ENCODE measurements at regions of chr4 and their contacts with region 1.

Region 1: GRCh38 chr4:87081826-87082225 is 138.6 kb downstream of the KLHL8 start:
- DNase-seq: no peak

Region 2: GRCh38 chr4:86564795-86565194 is 517.0 kb before region 1 on chr4:
- intact Hi-C with region 1: no loop called
- DNase-seq: no peak

Region 3: DNA sequence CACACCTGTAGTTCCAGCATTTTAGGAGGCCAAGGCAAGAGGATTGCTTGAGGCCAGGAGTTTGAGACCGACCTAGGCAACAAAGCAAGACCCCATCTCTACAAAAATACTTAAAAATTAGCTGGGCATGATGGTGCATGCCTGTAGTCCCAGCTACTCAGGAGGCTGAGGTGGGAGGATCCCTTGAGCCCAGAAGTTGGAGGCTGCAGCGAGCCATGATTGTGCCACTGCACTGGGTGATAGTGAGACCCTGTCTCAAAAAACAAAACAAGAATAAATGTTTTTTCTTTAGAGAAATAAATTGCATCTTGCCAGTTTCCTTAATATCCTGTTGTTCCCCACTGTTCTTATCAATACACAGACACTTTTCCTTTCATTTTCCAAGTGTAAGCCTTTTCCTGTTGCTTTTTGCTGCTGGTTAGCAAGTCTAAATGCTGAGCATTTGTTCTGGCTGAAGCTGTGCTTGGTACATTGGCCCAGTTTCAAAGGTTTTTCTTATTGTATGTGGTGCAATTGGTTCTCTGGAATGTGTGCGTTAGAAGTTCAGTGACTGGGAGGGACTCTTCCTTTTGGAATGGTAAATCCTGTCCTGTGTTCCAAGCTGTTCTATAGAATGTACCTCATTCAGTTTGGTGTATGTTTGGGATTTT is 48.8 kb before region 1 on chr4:
- intact Hi-C with region 1: loop called in 1 of 2 experiments (anchors 5 kb)
- DNase-seq: no peak

Region 4: DNA sequence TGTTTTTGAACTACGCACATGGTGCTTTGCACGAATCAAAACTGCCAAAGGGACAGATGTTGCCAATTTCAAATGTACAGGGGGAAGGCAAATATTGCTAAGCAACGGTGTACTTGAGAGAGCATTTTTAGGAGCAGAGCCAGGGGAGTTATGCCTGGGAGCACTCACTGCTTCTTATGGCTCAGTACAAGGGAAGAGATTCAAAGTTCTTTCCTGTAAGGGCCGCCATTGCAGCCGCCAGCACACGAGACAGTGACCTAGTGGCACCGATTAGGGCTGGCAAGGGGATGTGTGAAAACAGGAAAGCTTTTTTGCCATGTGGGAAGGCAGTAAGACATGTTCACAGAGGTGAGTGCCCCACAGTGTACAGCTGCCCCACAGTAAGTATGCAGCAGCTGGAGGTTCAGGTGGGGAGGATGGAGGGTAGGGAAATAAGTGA is 13.2 kb before region 1 on chr4:
- intact Hi-C with region 1: no loop called
- DNase-seq: no peak